ENCODE measurements at regions of chr6 and their contacts with region 1.

Region 1: GRCh38 chr6:30686908-30687658 is 638 bp upstream of the PPP1R18 start:
- DNase-seq: peak; percentile 98
- H3K4me3 ChIP-seq: peak overlapping the region; percentile 95
- H3K27ac ChIP-seq: peak overlapping the region; percentile 95
- H3K4me1 ChIP-seq: peaks cover 34% of the 10 kb centered on the region
- CTCF ChIP-seq: no peak

Region 2: GRCh38 chr6:30556066-30556905 is 130.8 kb before region 1 on chr6 and contains the start of gene GNL1:
- CTCF ChIA-PET with region 1: no interaction called
- POLR2A ChIA-PET with region 1: no interaction called
- intact Hi-C with region 1: no loop called
- DNase-seq: peak; percentile 97
- H3K4me3 ChIP-seq: peak within 1 kb of the TSS; percentile 84
- H3K27ac ChIP-seq: peak within 1 kb of the TSS; percentile 89
- H3K4me1 ChIP-seq: peaks cover 18% of the 10 kb centered on the region
- CTCF ChIP-seq: no peak
- total RNA-seq, gene GNL1: 51.2 and 66.4 TPM in 2 replicates

Region 3: DNA sequence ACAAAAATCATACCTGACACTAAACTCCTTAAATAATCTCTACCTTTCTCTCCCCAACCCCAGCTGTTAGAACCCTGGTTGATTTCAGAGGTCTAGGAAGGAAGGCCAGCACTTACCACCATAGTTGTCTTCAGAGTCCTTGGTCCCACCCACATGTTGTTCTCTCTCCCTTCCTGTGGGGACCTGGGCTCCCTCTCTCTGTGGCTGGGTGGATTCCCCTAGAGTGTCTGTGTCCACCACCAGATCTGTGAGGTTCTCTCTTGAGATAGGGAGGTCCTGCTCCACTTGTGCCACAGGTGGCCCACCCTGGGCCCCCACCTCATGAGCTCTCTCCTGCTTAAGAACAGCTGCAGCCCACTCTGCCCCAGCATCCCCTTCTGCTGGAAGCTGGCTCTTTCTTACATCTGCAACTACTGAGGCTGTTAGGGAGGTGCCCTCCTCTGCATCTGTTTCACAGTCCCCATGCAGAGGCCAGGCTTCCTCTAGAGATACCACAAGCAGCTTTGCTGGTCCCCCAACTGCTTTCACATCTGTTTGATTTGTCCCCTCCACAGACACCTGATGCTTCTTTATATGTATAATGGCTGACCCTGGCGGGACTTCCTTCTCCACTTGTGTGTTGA is 24.8 kb after region 1 on chr6:
- CTCF ChIA-PET with region 1: interaction called, 5 read pairs
- POLR2A ChIA-PET with region 1: interaction called, 71 read pairs
- intact Hi-C with region 1: loop called (anchors 1 kb)
- DNase-seq: no peak
- H3K4me3 ChIP-seq: no peak overlapping the region
- H3K27ac ChIP-seq: peak overlapping the region; percentile 26
- H3K4me1 ChIP-seq: peaks cover 41% of the 10 kb centered on the region
- CTCF ChIP-seq: no peak

Region 4: DNA sequence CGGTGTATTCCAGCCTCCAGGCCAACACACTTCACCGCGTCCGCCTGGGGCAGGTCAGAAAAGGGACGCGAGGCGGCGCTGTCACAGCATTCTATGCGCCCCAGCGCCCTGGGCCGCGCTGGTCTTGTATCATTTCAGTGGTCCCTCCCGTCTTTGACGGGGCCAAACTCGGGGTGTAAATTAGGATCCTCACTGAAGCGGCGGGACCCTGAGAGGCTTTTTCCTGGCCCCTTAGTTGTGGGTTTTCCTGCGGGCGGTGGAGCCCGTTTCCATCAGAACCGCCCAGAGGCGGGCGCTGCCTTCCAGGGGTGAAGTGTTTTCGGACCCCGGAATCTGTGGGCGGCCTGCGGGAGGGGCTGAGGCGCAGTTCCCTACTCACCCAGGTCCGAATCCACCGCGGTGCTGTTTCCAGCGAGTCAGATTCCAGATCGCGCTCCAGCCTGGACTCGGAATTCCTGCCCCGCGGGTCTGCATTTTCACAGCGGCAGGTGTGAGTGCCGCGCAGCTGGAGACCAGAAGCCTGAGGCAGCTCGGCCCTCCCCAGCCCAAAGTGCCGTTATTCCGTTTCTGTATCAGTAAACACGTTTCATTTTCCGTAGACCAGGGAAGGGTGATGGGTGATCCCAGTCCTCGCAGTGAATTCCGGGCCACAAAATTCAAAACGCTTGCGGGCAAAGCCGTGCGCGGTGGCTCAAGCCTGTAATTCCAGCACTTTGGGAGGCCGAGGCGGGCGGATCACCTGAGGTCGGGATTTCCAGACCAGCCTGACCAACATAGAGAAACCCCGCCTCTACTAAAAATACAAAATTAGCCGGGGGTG is 807.0 kb after region 1 on chr6:
- CTCF ChIA-PET with region 1: no interaction called
- POLR2A ChIA-PET with region 1: no interaction called
- intact Hi-C with region 1: loop called (anchors 10 kb)
- DNase-seq: peak; percentile 88
- H3K4me3 ChIP-seq: peak overlapping the region; percentile 82
- H3K27ac ChIP-seq: peak overlapping the region; percentile 78
- H3K4me1 ChIP-seq: peaks cover 35% of the 10 kb centered on the region
- CTCF ChIP-seq: peak; percentile 95